Astrocyte of the cerebellum (primary cell): ENCODE measurements at regions of chr16 and their contacts with region 1.

Region 1: DNA sequence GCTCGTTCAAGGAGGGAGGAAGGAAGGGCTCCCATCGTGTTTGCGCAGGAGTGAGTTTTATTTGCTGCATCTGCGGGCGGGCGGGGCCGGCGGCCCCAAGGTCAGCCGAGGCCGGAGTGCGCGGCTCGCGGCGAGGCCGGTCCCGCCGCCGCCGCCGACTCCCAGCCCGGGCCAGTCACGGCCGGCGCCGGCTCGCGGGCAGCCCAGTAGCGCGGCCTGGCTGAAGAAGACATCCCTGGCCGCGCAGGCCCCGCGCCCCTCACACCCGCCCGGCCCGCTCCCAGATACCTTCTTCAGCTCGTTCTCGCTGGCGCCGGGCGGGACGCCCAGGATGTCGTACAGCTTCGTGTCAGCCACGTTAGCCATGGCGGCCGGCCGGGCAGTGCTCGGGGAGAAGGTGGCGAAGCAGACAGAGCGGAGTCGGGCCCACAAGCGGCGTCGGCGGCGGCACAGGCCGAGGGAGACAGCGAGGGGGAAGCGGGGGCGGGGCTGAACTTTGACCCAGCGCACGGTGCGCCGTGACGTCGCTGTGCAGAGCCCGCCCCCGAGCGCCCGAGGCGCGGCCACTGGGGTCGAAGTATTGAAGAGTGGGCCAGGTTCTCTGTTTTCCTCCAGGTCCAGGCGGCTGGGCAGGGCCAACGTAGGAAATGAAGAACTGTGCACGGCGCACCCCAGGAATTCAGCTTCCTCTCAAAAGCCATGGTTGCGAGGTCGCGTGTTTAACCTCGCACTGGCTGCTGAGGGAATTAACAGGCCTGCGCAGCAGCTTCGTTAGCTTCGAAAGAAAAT is at the start of gene DNAJA2:
- DNase-seq: peak; percentile 62
- H3K4me3 ChIP-seq: peak within 1 kb of the TSS; percentile 84
- CTCF ChIP-seq: no peak

Region 2: DNA sequence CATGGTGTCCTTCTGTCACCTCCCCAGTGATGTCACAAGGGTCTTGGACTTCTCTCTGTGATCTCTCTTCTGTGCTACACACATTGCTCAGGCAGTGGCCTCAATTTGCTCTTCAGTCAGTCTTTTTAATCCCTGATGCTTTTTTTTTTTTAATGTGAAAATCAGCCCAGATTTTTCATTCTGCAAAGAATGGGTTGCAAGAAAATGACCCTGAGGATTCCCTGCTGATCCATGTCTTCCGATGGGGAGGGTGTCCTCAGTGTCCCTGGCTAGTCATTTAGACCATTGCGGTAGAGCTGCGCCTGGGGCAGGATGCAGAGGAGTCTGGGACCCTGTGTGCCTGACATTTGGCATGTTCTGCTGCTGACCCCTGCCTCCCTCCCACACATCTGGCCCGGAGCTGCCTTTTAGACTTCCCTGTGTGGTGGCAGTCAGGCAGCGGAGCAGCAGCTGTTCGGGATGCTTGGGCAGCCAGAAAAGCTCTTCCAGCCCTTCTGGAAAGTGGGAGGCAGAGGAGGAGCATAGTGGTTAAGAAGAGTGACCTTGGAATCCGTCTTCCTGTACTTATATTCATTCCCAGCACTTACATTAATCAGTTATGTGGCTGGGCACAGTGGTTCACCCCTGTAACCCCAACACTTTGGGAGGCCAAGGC is 77.0 kb before region 1 on chr16:
- in situ Hi-C with region 1: no loop called
- DNase-seq: no peak
- H3K4me3 ChIP-seq: no peak overlapping the region
- CTCF ChIP-seq: no peak

Region 3: DNA sequence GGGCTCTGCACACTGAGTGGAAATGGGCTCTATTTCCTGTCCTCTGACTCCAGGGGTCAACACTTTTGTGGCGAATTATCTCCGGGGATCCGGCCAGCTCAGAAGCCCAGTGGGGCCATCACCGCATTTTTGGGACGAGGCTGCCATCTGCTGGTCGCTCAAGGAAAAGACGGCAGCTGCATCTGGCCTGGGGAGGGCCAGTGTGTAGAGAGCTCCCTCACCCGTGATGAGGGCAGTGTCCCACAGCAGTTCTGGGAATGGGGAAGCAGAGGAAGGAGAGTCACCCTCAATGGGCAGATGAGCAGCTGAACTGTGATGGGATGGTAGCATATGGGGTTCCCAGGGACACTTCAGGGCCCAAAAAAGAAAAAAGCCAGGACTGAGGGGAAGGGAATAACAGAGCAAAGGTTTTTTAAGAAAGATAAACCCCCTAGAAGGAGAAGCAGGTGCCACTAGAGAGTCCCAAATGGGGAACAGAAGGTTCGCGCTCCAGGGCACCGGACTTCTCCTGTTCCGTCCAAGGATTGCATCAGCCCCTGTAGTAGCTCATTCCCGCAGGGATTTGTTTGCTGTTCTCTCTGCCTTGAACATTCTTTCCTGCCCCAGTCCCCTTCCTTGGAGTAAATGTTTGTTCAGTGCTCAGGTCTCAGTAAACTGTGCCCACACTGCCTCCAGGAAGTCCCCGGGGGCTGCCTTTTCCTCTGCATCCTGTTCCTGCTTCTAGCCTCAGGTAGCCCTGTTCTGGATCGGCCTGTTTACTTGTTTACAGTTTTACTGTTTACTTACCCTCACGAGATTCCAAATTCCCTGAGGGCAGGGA is 1191.7 kb after region 1 on chr16:
- in situ Hi-C with region 1: loop called (anchors 25 kb)
- DNase-seq: peak; percentile 31
- H3K4me3 ChIP-seq: no peak overlapping the region
- CTCF ChIP-seq: peak; percentile 73

Region 4: GRCh38 chr16:48632137-48632774 is 1658.9 kb after region 1 on chr16:
- in situ Hi-C with region 1: loop called (anchors 25 kb)
- DNase-seq: no peak
- H3K4me3 ChIP-seq: no peak overlapping the region
- CTCF ChIP-seq: no peak